GM13976 (cell line): ENCODE measurements at regions of chr11 and their contacts with region 1.

Region 1: GRCh38 chr11:126440792-126441514 is 85.5 kb downstream of the ST3GAL4 start:
- DNase-seq: peak; percentile 92
- CTCF ChIP-seq: peak; percentile 83

Region 2: GRCh38 chr11:126612671-126613070 is 171.7 kb after region 1 on chr11:
- in situ Hi-C with region 1: no loop called
- DNase-seq: no peak
- CTCF ChIP-seq: no peak

Region 3: DNA sequence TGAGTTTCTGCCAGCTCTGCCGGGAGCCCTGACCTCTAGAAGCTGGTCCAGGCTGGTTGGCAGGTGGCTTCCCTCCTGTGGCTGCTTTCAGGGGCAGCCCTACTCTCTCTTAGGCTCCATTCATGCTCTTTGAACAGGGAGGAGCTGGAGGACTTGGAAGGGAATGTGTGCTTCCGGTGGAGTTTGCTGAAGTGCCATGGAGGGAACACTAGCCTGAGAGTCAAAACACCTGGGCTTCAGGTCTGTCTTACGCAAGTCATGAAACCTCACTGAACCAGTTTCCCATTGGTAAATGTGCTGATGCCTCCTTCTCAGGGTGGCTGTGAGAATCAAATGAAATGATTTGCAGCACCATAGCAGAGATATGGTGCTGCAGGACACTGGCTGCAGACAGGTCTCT is 335.2 kb after region 1 on chr11:
- in situ Hi-C with region 1: no loop called
- DNase-seq: no peak
- CTCF ChIP-seq: no peak

Region 4: GRCh38 chr11:126938717-126939116 is 497.8 kb after region 1 on chr11:
- in situ Hi-C with region 1: no loop called
- DNase-seq: no peak
- CTCF ChIP-seq: no peak

Region 5: GRCh38 chr11:127345819-127346459 is 905.0 kb after region 1 on chr11:
- in situ Hi-C with region 1: loop called (anchors 25 kb)
- DNase-seq: peak; percentile 60
- CTCF ChIP-seq: peak; percentile 71